Right ventricle myocardium inferior (tissue), 1 donor: ENCODE measurements at regions of chr1 and their contacts with region 1.

Region 1: DNA sequence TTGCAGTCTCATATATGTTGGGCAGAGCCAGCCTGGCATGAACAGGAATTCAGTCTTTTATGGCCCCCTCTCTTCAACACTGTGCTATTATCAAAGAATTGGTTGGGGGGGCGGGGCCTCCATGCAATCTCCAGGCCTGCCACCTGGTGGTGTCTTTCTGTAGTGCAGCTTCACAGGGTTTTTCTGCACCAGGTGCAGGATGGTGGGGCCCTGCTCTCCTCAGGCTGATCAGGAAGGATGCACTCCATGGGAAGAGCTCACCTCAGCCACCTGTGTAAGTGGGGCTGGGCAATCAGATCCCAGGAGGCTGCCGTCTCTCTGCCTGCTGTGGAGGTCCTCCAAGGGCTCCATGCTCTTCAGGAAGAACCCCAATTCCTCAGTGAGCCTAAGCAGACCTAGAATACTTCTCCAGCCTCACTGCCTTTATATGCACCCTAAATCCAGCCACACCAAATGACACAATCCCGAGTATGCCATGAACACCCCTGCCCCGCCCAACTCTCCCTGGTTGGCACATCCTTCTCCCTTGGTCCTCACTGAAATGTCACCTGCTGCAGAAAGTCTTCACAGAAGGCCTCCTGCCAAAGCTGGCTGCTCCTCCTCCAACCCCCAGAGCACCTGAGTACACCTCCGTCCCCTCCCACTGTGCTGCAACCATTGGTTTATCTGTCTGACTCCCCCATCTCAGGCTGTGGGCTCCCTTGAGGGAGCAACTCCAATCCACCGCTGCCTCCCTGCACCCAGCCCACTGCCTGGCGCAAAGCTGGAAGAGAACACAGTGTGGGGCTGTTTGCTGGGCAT is 16.5 kb downstream of the STK40 start:
- DNase-seq: peak; percentile 89
- ATAC-seq: no peak

Region 2: GRCh38 chr1:36323597-36324352 is 45.5 kb before region 1 on chr1 and contains the start of gene EVA1B:
- intact Hi-C with region 1: loop called (anchors 5 kb)
- DNase-seq: peak; percentile 90
- ATAC-seq: peak; percentile 69
- total RNA-seq, gene EVA1B: 10.9 TPM